Calu3 (cell line): ENCODE measurements at regions of chr20 and their contacts with region 1.

Region 1: DNA sequence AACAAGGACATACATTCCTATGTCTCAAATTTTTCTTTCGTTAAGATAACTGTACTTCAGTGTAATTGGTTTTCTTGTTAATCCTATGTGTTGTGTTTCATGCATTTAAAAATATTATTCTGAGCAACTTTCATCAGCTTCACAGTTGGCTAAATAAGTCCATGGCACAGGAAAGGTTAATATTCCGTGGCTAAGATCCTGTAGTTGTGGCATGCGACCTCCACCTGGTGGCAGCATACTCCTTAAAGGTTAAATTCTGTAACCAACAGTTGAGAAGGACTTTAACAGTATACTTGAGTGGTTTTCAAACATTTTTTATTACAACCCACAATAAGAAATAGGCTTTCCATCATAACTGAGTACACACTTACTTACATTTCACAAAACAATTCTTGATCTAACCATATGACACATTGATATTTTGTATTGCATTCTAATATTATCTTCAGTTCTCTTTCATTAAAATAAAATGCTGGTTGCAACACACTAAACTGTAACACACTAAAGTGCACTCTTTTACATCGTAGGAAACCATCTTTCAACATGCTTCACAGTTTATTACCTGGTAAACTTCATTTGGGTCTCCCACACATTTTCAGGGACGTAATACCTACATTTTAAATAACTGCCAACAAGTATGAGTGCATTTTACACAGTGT is 118.3 kb downstream of the SLX4IP start:
- DNase-seq: peak; percentile 63
- H3K4me3 Mint-ChIP-seq: no peak overlapping the region
- H3K27ac Mint-ChIP-seq: no peak overlapping the region
- H3K4me1 Mint-ChIP-seq: peaks cover 46% of the 10 kb centered on the region
- H3K27me3 Mint-ChIP-seq: no peaks in the 10 kb centered on the region
- CTCF ChIP-seq: peak; percentile 40

Region 2: GRCh38 chr20:10578607-10579006 is 25.2 kb after region 1 on chr20:
- CTCF ChIA-PET with region 1: no interaction called
- intact Hi-C with region 1: no loop called
- DNase-seq: no peak
- H3K4me3 Mint-ChIP-seq: no peak overlapping the region
- H3K27ac Mint-ChIP-seq: no peak overlapping the region
- H3K4me1 Mint-ChIP-seq: peaks cover 16% of the 10 kb centered on the region
- H3K27me3 Mint-ChIP-seq: no peaks in the 10 kb centered on the region
- CTCF ChIP-seq: no peak

Region 3: GRCh38 chr20:10667077-10667401 is 113.6 kb after region 1 on chr20:
- CTCF ChIA-PET with region 1: no interaction called
- intact Hi-C with region 1: loop called (anchors 10 kb)
- DNase-seq: no peak
- H3K4me3 Mint-ChIP-seq: peak overlapping the region; percentile 82
- H3K27ac Mint-ChIP-seq: no peak overlapping the region
- H3K4me1 Mint-ChIP-seq: peaks cover 43% of the 10 kb centered on the region
- H3K27me3 Mint-ChIP-seq: no peaks in the 10 kb centered on the region
- CTCF ChIP-seq: no peak